H1 (cell line): ENCODE measurements at regions of chr3 and their contacts with region 1.

Region 1: DNA sequence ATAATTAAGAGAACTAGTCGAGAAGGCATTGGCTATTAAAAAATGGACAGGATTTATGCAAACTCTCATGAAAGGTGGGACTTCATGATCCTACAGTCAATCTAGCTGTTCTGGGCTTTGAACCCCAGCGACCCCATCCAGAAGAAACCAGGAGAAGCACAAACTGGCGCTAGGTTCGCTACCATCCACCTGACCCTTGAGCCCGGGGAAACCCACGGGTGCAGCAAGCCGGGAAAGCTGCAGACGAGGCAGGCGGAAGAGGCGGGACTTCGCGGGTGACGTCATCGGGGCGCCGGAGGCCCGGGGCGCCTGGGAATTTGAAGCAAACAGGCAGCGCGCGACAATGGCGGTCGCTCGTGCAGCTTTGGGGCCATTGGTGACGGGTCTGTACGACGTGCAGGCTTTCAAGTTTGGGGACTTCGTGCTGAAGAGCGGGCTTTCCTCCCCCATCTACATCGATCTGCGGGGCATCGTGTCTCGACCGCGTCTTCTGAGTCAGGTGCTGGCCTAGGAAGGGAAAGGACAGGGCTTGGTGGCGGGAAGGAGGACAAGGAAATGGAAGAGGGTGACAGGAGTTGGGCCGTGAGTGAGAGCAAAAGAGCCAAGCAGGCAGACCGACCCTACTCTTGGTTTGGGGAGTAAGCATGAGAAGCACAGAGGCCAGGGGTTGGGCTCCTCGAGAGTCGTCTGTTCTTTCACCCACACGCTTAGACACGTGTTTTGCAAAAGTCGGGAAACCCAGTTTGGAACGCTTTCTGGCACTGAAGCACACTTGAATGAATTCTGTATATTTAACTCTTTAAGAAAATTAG is at the start of gene UMPS:
- DNase-seq: peak in 1 of 2 experiments; percentile 90
- H3K4me3 ChIP-seq: peak within 1 kb of the TSS; percentile 89 to 100 (median 95)
- H3K27ac ChIP-seq: peak within 1 kb of the TSS; percentile 95
- H3K4me1 ChIP-seq: peaks cover 0 to 5% (median 0%) of the 10 kb centered on the region in 4 experiments; a peak in 1 of 7 replicates
- H3K27me3 ChIP-seq: no peaks in the 10 kb centered on the region; a peak in 2 of 7 replicates
- CTCF ChIP-seq: no peak
- EP300 ChIP-seq: no peak
- POLR2A ChIP-seq: peak; percentile 91 to 96
- RAD21 ChIP-seq: no peak; a peak in 1 of 4 replicates
- total RNA-seq, gene UMPS: 55.8 and 59.0 TPM in 2 replicates

Region 2: DNA sequence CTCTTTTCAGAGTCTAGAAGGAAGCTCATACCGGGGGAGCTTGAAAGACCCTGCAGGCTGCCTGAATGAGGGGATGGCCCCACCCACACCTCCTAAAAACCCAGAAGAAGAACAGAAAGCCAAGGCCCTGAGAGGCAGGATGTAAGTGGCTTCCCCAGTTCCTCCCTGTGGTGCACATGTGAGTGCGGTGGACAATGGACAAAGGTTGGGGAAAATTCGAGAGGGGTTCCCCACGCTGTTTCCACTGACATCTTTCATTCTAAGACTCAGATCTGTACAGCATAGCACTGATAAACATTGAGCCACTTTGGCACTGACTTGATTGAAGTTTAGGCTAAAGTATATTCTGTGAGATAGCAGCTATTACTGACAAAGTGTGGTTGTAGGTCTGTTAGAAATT is 79.5 kb before region 1 on chr3:
- CTCF ChIA-PET with region 1: no interaction called
- POLR2A ChIA-PET with region 1: no interaction called
- DNase-seq: no peak
- H3K4me3 ChIP-seq: no peak overlapping the region
- H3K27ac ChIP-seq: no peak overlapping the region
- H3K4me1 ChIP-seq: peaks cover 0 to 3% (median 0%) of the 10 kb centered on the region in 4 experiments; a peak in 1 of 7 replicates
- H3K27me3 ChIP-seq: no peaks in the 10 kb centered on the region
- CTCF ChIP-seq: no peak
- EP300 ChIP-seq: no peak
- POLR2A ChIP-seq: no peak
- RAD21 ChIP-seq: no peak

Region 3: GRCh38 chr3:124741027-124741426 is 10.7 kb after region 1 on chr3:
- CTCF ChIA-PET with region 1: interaction called, 4 read pairs
- POLR2A ChIA-PET with region 1: interaction called, 50 read pairs
- DNase-seq: no peak
- H3K4me3 ChIP-seq: no peak overlapping the region
- H3K27ac ChIP-seq: no peak overlapping the region
- H3K4me1 ChIP-seq: no peaks in the 10 kb centered on the region
- H3K27me3 ChIP-seq: no peaks in the 10 kb centered on the region
- CTCF ChIP-seq: no peak
- EP300 ChIP-seq: no peak
- POLR2A ChIP-seq: no peak
- RAD21 ChIP-seq: no peak

Region 4: DNA sequence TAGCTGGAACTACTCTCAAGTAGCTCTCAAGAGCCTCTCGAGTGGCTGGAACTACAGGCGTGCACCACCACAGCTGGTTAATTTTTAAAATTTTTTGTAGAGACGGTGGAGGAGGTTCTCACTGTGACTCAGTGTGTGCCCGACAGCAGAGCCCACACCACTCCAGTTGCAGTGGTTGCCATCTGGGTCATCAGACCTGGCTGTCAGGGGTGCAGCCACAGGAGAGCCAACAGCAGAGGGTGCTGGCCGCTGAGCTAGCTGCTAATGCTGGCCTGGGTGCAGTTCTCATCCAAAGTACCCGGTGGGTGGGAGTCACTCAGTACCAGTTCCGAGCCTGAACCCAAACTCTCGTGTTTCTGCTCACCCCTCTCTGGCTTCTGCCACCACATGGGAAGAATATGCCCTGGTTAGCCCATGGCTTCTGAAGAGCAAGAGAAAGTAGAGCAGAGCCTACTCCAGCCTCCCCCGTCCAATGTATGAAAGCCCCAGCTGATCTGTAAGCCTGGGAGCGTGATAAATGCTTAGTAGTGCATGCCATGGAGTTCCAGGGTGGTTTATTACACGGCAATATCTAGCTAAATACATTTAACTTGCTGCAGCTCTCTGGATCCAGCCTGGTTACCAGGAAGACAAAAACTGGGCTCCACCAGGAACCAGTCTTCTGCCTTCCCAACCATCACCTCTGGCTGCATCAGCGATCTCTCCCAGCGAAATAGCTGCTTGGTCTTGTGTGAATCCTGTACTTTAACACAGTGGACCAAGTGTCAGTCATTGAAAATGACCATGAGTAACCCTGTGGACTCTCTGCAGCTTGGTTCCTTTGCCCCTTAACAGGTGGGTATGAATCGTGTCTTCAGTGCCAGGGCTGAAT is 17.0 kb after region 1 on chr3:
- CTCF ChIA-PET with region 1: interaction called, 3 read pairs
- POLR2A ChIA-PET with region 1: interaction called, 50 read pairs
- DNase-seq: no peak
- H3K4me3 ChIP-seq: no peak overlapping the region
- H3K27ac ChIP-seq: no peak overlapping the region
- H3K4me1 ChIP-seq: peaks cover 0 to 3% (median 1%) of the 10 kb centered on the region in 4 experiments; a peak in 3 of 7 replicates
- H3K27me3 ChIP-seq: no peaks in the 10 kb centered on the region
- CTCF ChIP-seq: peak in 1 of 3 experiments; percentile 25; a peak in 1 of 4 replicates
- EP300 ChIP-seq: no peak
- POLR2A ChIP-seq: no peak
- RAD21 ChIP-seq: peak in 1 of 2 experiments; percentile 8; a peak in 1 of 4 replicates

Region 5: DNA sequence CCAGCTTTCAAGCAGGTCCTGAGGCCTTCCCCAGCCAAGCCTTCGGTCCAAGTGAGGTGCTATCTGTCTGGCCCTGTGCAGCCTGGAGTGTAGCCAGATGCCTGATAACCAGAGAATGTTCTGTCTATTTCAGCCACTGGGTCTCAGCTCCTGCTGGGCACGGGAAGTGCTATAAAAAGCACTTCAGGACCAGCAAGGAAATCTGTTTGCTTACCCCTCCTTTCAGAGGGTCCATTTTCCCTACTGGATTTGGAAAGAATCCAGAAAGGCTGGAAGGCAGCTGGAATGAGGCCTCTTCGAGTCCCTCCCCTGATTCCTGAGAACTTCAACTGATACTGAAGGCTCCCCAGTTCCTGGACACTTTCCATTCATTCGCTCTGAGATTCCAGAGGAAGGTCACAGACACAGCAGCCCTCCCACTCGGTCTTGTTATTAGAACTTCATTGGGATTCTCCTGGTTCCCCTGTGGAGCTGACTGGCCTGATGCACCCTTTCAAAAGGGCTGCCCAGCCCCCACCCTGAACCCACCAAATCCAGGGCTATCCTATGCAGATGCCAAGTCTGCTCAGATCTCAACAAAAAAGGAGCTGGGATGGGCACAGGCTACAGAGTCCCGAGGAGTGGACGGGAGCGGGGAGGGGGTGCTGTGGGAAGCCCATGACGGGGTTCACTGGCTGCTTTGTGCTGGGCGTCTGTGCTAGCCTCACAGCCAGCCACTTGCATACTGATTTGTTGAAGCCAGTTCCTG is 70.3 kb after region 1 on chr3:
- CTCF ChIA-PET with region 1: no interaction called
- POLR2A ChIA-PET with region 1: no interaction called
- DNase-seq: no peak
- H3K4me3 ChIP-seq: no peak overlapping the region
- H3K27ac ChIP-seq: no peak overlapping the region
- H3K4me1 ChIP-seq: peaks cover 2 to 16% (median 4%) of the 10 kb centered on the region in 4 experiments; a peak in 6 of 7 replicates
- H3K27me3 ChIP-seq: no peaks in the 10 kb centered on the region
- CTCF ChIP-seq: no peak
- EP300 ChIP-seq: no peak
- POLR2A ChIP-seq: 0 out of 3 replicates have a peak, but pooled peaks of 1 of the 2 experiments have one; percentile 18
- RAD21 ChIP-seq: no peak

Region 6: GRCh38 chr3:124845406-124845805 is 115.1 kb after region 1 on chr3:
- CTCF ChIA-PET with region 1: no interaction called
- POLR2A ChIA-PET with region 1: no interaction called
- DNase-seq: no peak
- H3K4me3 ChIP-seq: no peak overlapping the region
- H3K27ac ChIP-seq: no peak overlapping the region
- H3K4me1 ChIP-seq: peaks cover 0 to 5% (median 0%) of the 10 kb centered on the region in 4 experiments; a peak in 2 of 7 replicates
- H3K27me3 ChIP-seq: no peaks in the 10 kb centered on the region; a peak in 1 of 7 replicates
- CTCF ChIP-seq: no peak
- EP300 ChIP-seq: no peak
- POLR2A ChIP-seq: no peak
- RAD21 ChIP-seq: no peak